CD8-positive, alpha-beta memory T cell (primary cell): ENCODE measurements at regions of chr3 and their contacts with region 1.

Region 1: DNA sequence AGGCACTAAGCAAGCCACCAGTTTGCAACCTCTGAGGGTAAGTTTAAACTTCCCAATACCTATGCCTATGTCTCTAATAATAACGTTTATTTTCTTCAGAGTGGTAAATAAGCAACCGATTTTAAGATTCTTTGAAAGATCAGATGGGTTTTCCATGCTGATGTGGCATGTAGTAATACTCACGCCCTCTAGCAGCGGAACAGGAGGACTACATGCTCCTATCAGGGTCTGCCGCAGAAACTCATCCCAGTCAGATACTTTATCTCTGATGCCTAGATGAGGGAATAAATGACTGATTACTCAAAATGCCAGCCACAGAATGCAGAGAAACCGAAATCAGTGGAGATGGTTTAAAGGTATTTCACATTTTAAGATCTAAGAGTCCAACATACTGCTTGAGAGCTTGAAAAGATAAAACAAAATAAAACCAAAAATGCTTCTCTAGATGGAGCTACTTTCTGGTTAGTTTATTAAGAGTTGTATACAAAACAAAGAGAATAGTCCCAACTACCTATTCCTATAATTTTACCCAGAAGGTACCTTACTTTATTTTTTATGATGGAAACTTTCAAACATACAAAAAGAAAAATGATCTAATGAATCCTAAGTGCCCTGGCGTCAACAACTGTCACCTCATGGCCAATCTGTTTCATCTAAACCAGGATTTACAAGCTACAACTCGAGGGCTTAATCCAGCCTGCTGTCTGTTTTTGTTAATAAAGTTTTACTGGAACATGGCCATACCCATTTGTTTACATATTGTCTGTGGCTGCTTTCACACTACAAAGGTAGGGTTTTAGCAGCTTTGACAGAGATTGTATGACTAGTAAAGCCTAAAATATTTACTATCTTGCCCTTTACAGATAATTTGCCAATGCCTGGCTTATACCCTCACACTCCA is 37.5 kb upstream of the STIMATE start:
- DNase-seq: peak; percentile 10 to 62 (median 24)
- H3K4me3 ChIP-seq: no peak overlapping the region
- H3K4me3 Mint-ChIP-seq: peak overlapping the region in 2 of 7 donors; percentile 18 to 43
- H3K27ac ChIP-seq: no peak overlapping the region
- H3K27ac Mint-ChIP-seq: peak overlapping the region in 6 of 8 donors; percentile 15 to 87 (median 72)
- H3K4me1 ChIP-seq: no peaks in the 10 kb centered on the region
- H3K4me1 Mint-ChIP-seq: peaks cover 4 to 11% (median 6%) of the 10 kb centered on the region in 3 donors
- H3K27me3 ChIP-seq: no peaks in the 10 kb centered on the region
- H3K27me3 Mint-ChIP-seq: no peaks in the 10 kb centered on the region

Region 2: GRCh38 chr3:53045518-53046170 is 110.8 kb after region 1 on chr3 and contains the start of gene SFMBT1:
- CTCF ChIA-PET with region 1: interaction called, 15 read pairs
- POLR2A ChIA-PET with region 1: interaction called, 7 read pairs
- DNase-seq: peak; percentile 69 to 87 (median 70)
- H3K4me3 ChIP-seq: peak within 1 kb of the TSS; percentile 71
- H3K4me3 Mint-ChIP-seq: peak within 1 kb of the TSS; percentile 95 to 99 (median 99)
- H3K27ac ChIP-seq: peak within 1 kb of the TSS; percentile 66
- H3K27ac Mint-ChIP-seq: peak within 1 kb of the TSS; percentile 97 to 99 (median 98)
- H3K4me1 ChIP-seq: peaks cover 27% of the 10 kb centered on the region
- H3K4me1 Mint-ChIP-seq: peaks cover 35 to 45% (median 39%) of the 10 kb centered on the region in 3 donors
- H3K27me3 ChIP-seq: no peaks in the 10 kb centered on the region
- H3K27me3 Mint-ChIP-seq: peaks cover 0 to 4% of the 10 kb centered on the region in 2 donors
- total RNA-seq, gene SFMBT1: 18.3 to 21.0 TPM